Activated CD4-positive, alpha-beta T cell treated with anti-CD3 and anti-CD28 coated beads for 36 hours (primary cell): ENCODE measurements at regions of chr12 and their contacts with region 1.

Region 1: DNA sequence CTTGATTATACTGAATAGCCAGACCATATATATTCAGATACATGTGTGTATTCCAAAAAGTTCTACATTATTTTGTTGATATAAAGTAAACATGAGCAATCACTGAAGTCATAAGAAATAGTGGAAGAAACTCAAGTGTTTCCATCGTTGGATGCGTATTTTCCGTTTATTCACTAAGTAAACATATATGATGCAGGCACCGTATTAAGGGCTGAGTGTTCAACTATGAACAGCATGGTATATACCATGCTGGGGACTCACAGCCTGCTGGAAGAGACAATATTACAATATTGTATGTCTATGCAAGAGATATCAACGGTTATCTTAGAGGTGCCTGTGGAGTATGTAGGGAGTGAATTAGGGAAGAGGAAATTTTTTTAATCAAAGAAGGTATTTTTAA is 1.2 kb downstream of the PYROXD1 start:
- DNase-seq: no peak
- ATAC-seq: no peak
- H3K4me3 Mint-ChIP-seq: peak overlapping the region; percentile 92
- H3K27ac Mint-ChIP-seq: peak overlapping the region; percentile 96
- H3K4me1 Mint-ChIP-seq: peaks cover 41% of the 10 kb centered on the region
- H3K27me3 Mint-ChIP-seq: no peaks in the 10 kb centered on the region

Region 2: GRCh38 chr12:21257172-21257571 is 181.5 kb before region 1 on chr12:
- CTCF ChIA-PET with region 1: no interaction called
- POLR2A ChIA-PET with region 1: no interaction called
- intact Hi-C with region 1: no loop called
- DNase-seq: no peak
- ATAC-seq: no peak
- H3K4me3 Mint-ChIP-seq: no peak overlapping the region
- H3K27ac Mint-ChIP-seq: no peak overlapping the region
- H3K4me1 Mint-ChIP-seq: no peaks in the 10 kb centered on the region
- H3K27me3 Mint-ChIP-seq: peaks cover 3% of the 10 kb centered on the region

Region 3: DNA sequence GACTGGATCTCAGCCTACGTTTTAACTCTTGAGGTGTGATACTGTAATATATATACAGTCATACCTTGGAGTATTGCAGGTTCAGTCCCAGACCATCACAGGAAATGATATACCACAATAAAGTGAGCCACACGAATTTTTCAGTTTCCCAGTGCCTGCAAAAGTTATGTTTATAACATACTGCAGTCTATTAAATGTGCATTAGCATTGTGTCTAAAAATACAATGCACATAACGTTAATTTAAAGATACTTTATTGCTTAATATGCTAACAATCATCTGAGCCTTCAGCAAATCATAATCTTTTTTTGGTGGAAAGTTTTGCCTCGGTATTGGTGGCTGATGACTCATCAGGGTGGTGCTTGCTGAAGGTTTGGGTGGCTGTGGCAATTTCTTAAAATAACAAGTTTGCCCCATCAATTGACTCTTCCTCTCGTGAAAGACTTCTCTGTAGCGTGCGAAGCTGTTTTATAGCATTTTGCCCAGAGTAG is 17.7 kb after region 1 on chr12:
- CTCF ChIA-PET with region 1: interaction called, 4 read pairs
- POLR2A ChIA-PET with region 1: interaction called, 4 read pairs
- intact Hi-C with region 1: loop called (anchors 1 kb)
- DNase-seq: peak; percentile 59
- ATAC-seq: peak; percentile 84
- H3K4me3 Mint-ChIP-seq: no peak overlapping the region
- H3K27ac Mint-ChIP-seq: peak overlapping the region; percentile 74
- H3K4me1 Mint-ChIP-seq: peaks cover 42% of the 10 kb centered on the region
- H3K27me3 Mint-ChIP-seq: no peaks in the 10 kb centered on the region

Region 4: DNA sequence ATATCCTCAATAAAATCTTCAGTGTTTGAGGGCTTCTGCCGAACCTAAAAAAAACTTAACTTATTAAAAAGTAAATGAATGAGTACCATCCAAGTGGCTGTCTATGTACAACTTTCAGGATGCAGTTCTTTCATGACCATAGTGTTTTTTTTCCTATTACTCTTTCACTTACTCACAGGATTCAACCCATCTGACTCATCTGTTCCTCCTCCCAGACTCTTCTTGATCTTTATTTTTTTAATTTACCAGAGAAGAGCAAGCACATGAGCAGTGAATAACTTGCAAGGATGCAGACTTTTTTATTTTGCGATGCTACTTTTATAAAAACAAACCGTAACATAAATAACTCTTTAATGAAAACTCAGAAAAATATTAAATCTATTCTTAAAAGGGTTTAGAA is 38.3 kb after region 1 on chr12:
- CTCF ChIA-PET with region 1: no interaction called
- POLR2A ChIA-PET with region 1: no interaction called
- intact Hi-C with region 1: loop called in 1 of 2 experiments (anchors 2 kb)
- DNase-seq: no peak
- ATAC-seq: peak; percentile 92
- H3K4me3 Mint-ChIP-seq: no peak overlapping the region
- H3K27ac Mint-ChIP-seq: peak overlapping the region; percentile 49
- H3K4me1 Mint-ChIP-seq: peaks cover 15% of the 10 kb centered on the region
- H3K27me3 Mint-ChIP-seq: no peaks in the 10 kb centered on the region

Region 5: DNA sequence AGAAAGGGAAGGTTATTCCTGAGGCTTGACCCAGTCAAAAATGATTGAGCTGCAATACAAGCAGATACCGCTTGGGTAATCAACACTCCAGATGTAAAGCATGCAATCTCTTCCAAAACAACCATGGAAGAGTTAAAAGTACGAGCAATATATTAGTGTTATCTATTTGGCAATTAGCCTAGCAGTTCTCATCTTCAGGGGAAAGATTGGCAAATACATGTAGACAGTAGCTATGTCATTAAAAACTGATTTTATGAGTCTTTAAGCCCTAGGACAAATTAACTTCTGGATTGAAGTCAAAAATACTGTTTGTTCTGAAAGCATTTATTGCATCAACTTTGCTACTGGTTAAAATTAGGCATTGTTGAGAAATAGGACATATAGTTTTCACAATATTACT is 175.3 kb after region 1 on chr12:
- CTCF ChIA-PET with region 1: no interaction called
- POLR2A ChIA-PET with region 1: no interaction called
- intact Hi-C with region 1: loop called in 1 of 2 experiments (anchors 2 kb)
- DNase-seq: no peak
- ATAC-seq: no peak
- H3K4me3 Mint-ChIP-seq: no peak overlapping the region
- H3K27ac Mint-ChIP-seq: no peak overlapping the region
- H3K4me1 Mint-ChIP-seq: peaks cover 59% of the 10 kb centered on the region
- H3K27me3 Mint-ChIP-seq: no peaks in the 10 kb centered on the region

Region 6: GRCh38 chr12:21657326-21658077 is 218.9 kb after region 1 on chr12 and contains the start of gene LDHB:
- CTCF ChIA-PET with region 1: no interaction called
- POLR2A ChIA-PET with region 1: no interaction called
- intact Hi-C with region 1: loop called (anchors 1 to 5 kb)
- DNase-seq: peak; percentile 97
- ATAC-seq: peak; percentile 97
- H3K4me3 Mint-ChIP-seq: peak within 1 kb of the TSS; percentile 81
- H3K27ac Mint-ChIP-seq: peak within 1 kb of the TSS; percentile 99
- H3K4me1 Mint-ChIP-seq: peaks cover 45% of the 10 kb centered on the region
- H3K27me3 Mint-ChIP-seq: no peaks in the 10 kb centered on the region
- total RNA-seq, gene LDHB: 918 to 1,852 TPM

Region 7: GRCh38 chr12:22046090-22046967 is 607.7 kb after region 1 on chr12 and contains the start of gene CMAS:
- CTCF ChIA-PET with region 1: no interaction called
- POLR2A ChIA-PET with region 1: no interaction called
- intact Hi-C with region 1: loop called (anchors 1 to 5 kb)
- DNase-seq: peak; percentile 90
- ATAC-seq: peak; percentile 88
- H3K4me3 Mint-ChIP-seq: peak within 1 kb of the TSS; percentile 82
- H3K27ac Mint-ChIP-seq: peak within 1 kb of the TSS; percentile 92
- H3K4me1 Mint-ChIP-seq: peaks cover 51% of the 10 kb centered on the region
- H3K27me3 Mint-ChIP-seq: no peaks in the 10 kb centered on the region
- total RNA-seq, gene CMAS: 33.5 to 52.1 TPM